B cell (primary cell): ENCODE measurements at regions of chr5 and their contacts with region 1.

Region 1: GRCh38 chr5:177403792-177404640 is 3.6 kb upstream of the PFN3 start:
- DNase-seq: peak; percentile 91
- ATAC-seq: peak; percentile 82
- H3K4me3 ChIP-seq: peak overlapping the region; percentile 14 to 68 (median 61)
- H3K4me3 Mint-ChIP-seq: peak overlapping the region; percentile 84
- H3K27ac ChIP-seq: peak overlapping the region in 1 of 2 donors; percentile 48
- H3K27ac Mint-ChIP-seq: peak overlapping the region; percentile 32
- H3K4me1 ChIP-seq: peaks cover 38 to 50% of the 10 kb centered on the region in 2 donors
- H3K4me1 Mint-ChIP-seq: peaks cover 39% of the 10 kb centered on the region
- H3K27me3 ChIP-seq: peaks cover 0 to 37% (median 9%) of the 10 kb centered on the region in 4 experiments
- H3K27me3 Mint-ChIP-seq: peaks cover 14% of the 10 kb centered on the region
- CTCF ChIP-seq: peak; percentile 70

Region 2: GRCh38 chr5:177064500-177065277 is 339.3 kb before region 1 on chr5:
- CTCF ChIA-PET with region 1: no interaction called
- POLR2A ChIA-PET with region 1: no interaction called
- intact Hi-C with region 1: no loop called
- DNase-seq: no peak
- ATAC-seq: no peak
- H3K4me3 ChIP-seq: no peak overlapping the region
- H3K4me3 Mint-ChIP-seq: no peak overlapping the region
- H3K27ac ChIP-seq: no peak overlapping the region
- H3K27ac Mint-ChIP-seq: no peak overlapping the region
- H3K4me1 ChIP-seq: peaks cover 0 to 14% of the 10 kb centered on the region in 2 donors
- H3K4me1 Mint-ChIP-seq: peaks cover 14% of the 10 kb centered on the region
- H3K27me3 ChIP-seq: no peaks in the 10 kb centered on the region
- H3K27me3 Mint-ChIP-seq: no peaks in the 10 kb centered on the region
- CTCF ChIP-seq: no peak

Region 3: DNA sequence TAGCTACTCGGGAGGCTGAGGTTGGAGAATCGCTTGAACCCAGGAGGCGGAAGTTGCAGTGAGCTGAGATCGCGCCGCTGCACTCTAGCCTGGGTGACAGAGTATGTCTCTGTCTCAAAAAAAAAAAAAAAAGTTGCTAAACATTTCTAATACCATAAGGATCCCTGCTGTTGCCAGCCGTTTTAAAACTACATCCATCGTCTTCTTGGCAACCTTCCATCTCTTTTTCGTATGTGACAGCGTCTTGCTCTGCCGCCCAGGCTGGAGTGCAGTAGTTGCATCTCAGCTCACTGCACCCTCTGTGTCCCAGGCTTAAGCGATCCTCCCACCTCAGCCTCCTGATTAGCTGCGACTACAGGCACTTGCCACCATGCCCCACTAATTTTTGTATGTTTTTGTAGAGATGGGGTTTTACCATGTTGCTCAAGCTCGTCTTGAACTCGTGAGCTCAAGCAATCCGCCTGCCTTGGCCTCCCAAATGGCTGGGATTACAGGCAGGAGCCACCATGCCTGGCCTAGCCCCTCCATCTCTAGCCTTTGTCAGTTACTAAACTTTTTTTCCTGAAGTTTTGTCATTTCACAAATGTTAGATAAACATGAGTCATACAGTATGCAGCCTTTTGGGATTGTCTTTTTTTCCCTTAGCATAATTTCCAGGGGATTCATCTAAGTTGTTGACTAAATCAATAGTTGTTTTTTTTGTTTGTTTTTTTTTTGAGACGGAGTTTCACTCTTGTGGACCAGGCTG is 257.0 kb before region 1 on chr5:
- CTCF ChIA-PET with region 1: no interaction called
- POLR2A ChIA-PET with region 1: no interaction called
- intact Hi-C with region 1: no loop called
- DNase-seq: no peak
- ATAC-seq: no peak
- H3K4me3 ChIP-seq: no peak overlapping the region
- H3K4me3 Mint-ChIP-seq: no peak overlapping the region
- H3K27ac ChIP-seq: no peak overlapping the region
- H3K27ac Mint-ChIP-seq: peak overlapping the region; percentile 3
- H3K4me1 ChIP-seq: peaks cover 3 to 4% of the 10 kb centered on the region in 2 donors
- H3K4me1 Mint-ChIP-seq: peaks cover 11% of the 10 kb centered on the region
- H3K27me3 ChIP-seq: no peaks in the 10 kb centered on the region
- H3K27me3 Mint-ChIP-seq: no peaks in the 10 kb centered on the region
- CTCF ChIP-seq: no peak

Region 4: DNA sequence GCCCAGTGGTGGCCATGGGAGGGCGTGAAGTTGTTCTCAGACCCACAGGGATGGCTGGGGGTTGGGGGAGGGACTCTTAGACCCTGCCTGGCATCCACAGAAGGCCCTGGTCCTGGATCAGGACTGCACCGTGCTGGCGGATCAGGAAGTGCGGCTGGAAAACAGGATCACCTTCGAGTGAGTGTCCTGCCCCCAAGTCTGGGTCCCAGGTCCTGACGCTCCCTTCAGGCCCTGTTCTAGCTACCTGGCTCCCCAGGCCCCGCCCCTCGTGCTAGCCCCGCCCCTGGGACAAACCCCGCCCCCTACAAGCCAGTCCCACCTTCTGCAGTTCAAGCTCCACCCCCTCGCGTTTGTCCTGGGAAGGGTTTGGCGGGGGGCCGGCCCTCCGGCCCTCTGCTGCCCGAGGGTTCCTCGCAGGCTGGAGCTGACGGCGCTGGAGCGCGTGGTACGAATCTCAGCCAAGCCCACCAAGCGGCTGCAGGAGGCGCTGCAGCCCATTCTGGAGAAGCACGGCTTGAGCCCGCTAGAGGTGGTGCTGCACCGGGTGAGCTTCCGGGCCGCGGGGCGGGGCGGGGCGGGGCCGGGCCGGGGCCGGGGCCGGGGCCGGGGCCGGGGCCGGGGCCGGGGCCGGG is 33.4 kb before region 1 on chr5:
- CTCF ChIA-PET with region 1: interaction called, 10 read pairs
- POLR2A ChIA-PET with region 1: no interaction called
- intact Hi-C with region 1: no loop called
- DNase-seq: peak; percentile 63
- ATAC-seq: peak; percentile 75
- H3K4me3 ChIP-seq: peak overlapping the region in 1 of 5 experiments; percentile 42
- H3K4me3 Mint-ChIP-seq: peak overlapping the region; percentile 63
- H3K27ac ChIP-seq: no peak overlapping the region
- H3K27ac Mint-ChIP-seq: no peak overlapping the region
- H3K4me1 ChIP-seq: peaks cover 35 to 38% of the 10 kb centered on the region in 2 donors
- H3K4me1 Mint-ChIP-seq: peaks cover 42% of the 10 kb centered on the region
- H3K27me3 ChIP-seq: no peaks in the 10 kb centered on the region
- H3K27me3 Mint-ChIP-seq: no peaks in the 10 kb centered on the region
- CTCF ChIP-seq: peak; percentile 33

Region 5: GRCh38 chr5:177425801-177426565 is 22.0 kb after region 1 on chr5:
- CTCF ChIA-PET with region 1: interaction called, 137 read pairs
- POLR2A ChIA-PET with region 1: interaction called, 35 read pairs
- intact Hi-C with region 1: loop called (anchors 1 kb)
- DNase-seq: peak; percentile 100
- ATAC-seq: peak; percentile 82
- H3K4me3 ChIP-seq: peak overlapping the region; percentile 28 to 74 (median 61)
- H3K4me3 Mint-ChIP-seq: peak overlapping the region; percentile 93
- H3K27ac ChIP-seq: peak overlapping the region; percentile 82 to 88
- H3K27ac Mint-ChIP-seq: peak overlapping the region; percentile 97
- H3K4me1 ChIP-seq: peaks cover 47 to 49% of the 10 kb centered on the region in 2 donors
- H3K4me1 Mint-ChIP-seq: peaks cover 49% of the 10 kb centered on the region
- H3K27me3 ChIP-seq: no peaks in the 10 kb centered on the region
- H3K27me3 Mint-ChIP-seq: no peaks in the 10 kb centered on the region
- CTCF ChIP-seq: no peak

Region 6: DNA sequence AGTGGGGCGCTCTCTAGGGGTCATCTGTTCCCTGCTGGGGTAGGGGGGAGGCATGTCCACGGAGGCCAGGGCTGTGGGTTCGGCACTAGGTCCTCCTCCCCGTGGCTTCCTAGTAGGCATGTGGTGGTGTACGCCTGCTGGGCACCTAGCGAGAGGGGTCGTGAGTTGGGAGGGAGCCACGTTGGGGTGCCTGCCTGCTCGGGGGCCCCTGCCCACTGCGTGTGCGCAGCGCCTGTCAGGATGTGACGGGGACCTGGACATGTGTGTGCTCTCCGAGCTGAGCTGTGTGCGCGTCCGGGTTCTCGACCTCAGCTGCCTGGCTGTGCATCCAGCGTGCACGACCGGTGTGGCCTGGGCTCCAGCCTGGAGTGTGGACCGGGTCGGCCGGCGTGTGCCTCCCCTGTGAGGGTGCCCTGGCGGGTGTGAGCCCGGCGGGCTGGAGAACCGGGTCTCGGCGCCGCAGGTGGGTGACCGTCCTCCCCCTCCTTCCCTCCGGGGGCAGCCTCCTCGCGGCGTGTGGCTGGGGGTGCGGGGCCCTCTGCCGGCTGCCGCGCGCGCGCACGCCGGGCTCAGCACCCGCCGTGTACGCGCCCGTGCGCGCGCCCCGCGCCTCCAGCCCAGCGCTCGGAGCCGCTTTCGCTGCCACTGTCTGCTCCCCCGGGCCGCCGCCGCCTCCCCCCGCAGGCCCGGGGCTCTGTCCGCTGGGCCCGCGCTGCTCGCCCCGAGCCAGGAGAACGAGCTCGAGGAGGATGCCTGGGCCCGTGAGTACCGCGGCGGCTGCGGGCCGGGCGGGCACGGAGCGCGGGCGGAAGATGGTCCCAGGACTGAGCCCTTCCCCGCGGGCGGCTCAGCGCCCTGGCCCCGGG is 42.4 kb after region 1 on chr5 and contains the start of gene PRR7:
- CTCF ChIA-PET with region 1: interaction called, 628 read pairs
- POLR2A ChIA-PET with region 1: interaction called, 87 read pairs
- intact Hi-C with region 1: loop called (anchors 2 kb)
- DNase-seq: peak; percentile 91
- ATAC-seq: peak; percentile 64
- H3K4me3 ChIP-seq: peak within 1 kb of the TSS in 4 of 5 experiments; percentile 45 to 66 (median 54)
- H3K4me3 Mint-ChIP-seq: peak within 1 kb of the TSS; percentile 82
- H3K27ac ChIP-seq: peak within 1 kb of the TSS; percentile 68 to 77
- H3K27ac Mint-ChIP-seq: peak within 1 kb of the TSS; percentile 92
- H3K4me1 ChIP-seq: peaks cover 34 to 50% of the 10 kb centered on the region in 2 donors
- H3K4me1 Mint-ChIP-seq: peaks cover 48% of the 10 kb centered on the region
- H3K27me3 ChIP-seq: peaks cover 0 to 14% (median 0%) of the 10 kb centered on the region in 4 experiments
- H3K27me3 Mint-ChIP-seq: no peaks in the 10 kb centered on the region
- CTCF ChIP-seq: no peak
- total RNA-seq, gene PRR7: 4.8 and 5.6 TPM in 2 replicates

Region 7: GRCh38 chr5:177497292-177498033 is 93.4 kb after region 1 on chr5 and contains the start of gene PDLIM7:
- CTCF ChIA-PET with region 1: interaction called, 51 read pairs
- POLR2A ChIA-PET with region 1: no interaction called
- intact Hi-C with region 1: no loop called
- DNase-seq: peak; percentile 97
- ATAC-seq: peak; percentile 84
- H3K4me3 ChIP-seq: peak within 1 kb of the TSS; percentile 9 to 68 (median 65)
- H3K4me3 Mint-ChIP-seq: peak within 1 kb of the TSS; percentile 93
- H3K27ac ChIP-seq: no peak within 1 kb of the TSS
- H3K27ac Mint-ChIP-seq: peak within 1 kb of the TSS; percentile 73
- H3K4me1 ChIP-seq: peaks cover 58 to 72% of the 10 kb centered on the region in 2 donors
- H3K4me1 Mint-ChIP-seq: peaks cover 75% of the 10 kb centered on the region
- H3K27me3 ChIP-seq: peaks cover 0 to 10% (median 4%) of the 10 kb centered on the region in 4 experiments
- H3K27me3 Mint-ChIP-seq: peaks cover 3% of the 10 kb centered on the region
- CTCF ChIP-seq: no peak
- total RNA-seq, gene PDLIM7: 24.2 and 25.8 TPM in 2 replicates

Region 8: GRCh38 chr5:177599731-177600507 is 195.9 kb after region 1 on chr5 and contains the start of gene B4GALT7:
- CTCF ChIA-PET with region 1: interaction called, 3 read pairs
- POLR2A ChIA-PET with region 1: no interaction called
- intact Hi-C with region 1: loop called (anchors 10 kb)
- DNase-seq: peak; percentile 88
- ATAC-seq: peak; percentile 88
- H3K4me3 ChIP-seq: peak within 1 kb of the TSS; percentile 61 to 87 (median 81)
- H3K4me3 Mint-ChIP-seq: peak within 1 kb of the TSS; percentile 95
- H3K27ac ChIP-seq: peak within 1 kb of the TSS; percentile 74 to 94
- H3K27ac Mint-ChIP-seq: peak within 1 kb of the TSS; percentile 94
- H3K4me1 ChIP-seq: peaks cover 13 to 27% of the 10 kb centered on the region in 2 donors
- H3K4me1 Mint-ChIP-seq: peaks cover 29% of the 10 kb centered on the region
- H3K27me3 ChIP-seq: no peaks in the 10 kb centered on the region
- H3K27me3 Mint-ChIP-seq: no peaks in the 10 kb centered on the region
- CTCF ChIP-seq: no peak
- total RNA-seq, gene B4GALT7: 38.9 and 41.8 TPM in 2 replicates